Aorta (tissue), 5 donors: ENCODE measurements at regions of chr17 and their contacts with region 1.

Region 1: DNA sequence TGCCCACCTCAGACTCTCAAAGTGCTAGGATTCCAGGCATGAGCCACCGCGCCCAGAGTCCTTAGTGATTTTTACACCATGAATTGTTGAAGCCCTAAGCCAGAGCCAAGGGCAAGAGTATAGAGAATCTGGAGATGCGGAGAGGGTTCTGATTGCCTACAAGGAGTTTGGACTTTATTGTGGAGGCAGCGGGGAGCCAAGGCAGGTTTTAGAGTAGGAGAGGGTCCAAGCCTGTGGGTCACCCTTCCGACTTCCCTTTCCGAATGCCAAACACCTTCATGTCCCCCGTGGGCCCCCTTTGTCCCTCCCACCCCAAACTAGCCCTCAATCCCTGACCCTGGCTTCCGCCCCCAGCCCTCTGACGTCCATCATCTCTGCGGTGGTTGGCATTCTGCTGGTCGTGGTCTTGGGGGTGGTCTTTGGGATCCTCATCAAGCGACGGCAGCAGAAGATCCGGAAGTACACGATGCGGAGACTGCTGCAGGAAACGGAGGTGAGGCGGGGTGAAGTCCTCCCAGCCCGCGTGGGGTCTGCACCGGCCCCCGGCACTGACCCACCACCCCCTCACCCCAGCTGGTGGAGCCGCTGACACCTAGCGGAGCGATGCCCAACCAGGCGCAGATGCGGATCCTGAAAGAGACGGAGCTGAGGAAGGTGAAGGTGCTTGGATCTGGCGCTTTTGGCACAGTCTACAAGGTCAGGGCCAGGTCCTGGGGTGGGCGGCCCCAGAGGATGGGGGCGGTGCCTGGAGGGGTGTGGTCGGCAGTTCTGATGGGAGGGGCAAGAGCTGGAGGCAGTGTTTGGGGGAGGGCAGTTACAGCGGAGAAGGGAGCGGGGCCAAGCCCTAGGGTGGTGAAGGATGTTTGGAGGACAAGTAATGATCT is 7.1 kb downstream of the MIEN1 start:
- DNase-seq: peak in 1 of 2 donors; percentile 34
- ATAC-seq: no peak
- H3K4me3 ChIP-seq: no peak overlapping the region
- H3K27ac ChIP-seq: no peak overlapping the region
- H3K4me1 ChIP-seq: no peaks in the 10 kb centered on the region
- H3K27me3 ChIP-seq: no peaks in the 10 kb centered on the region

Region 2: GRCh38 chr17:39676198-39676819 is 46.9 kb before region 1 on chr17:
- intact Hi-C with region 1: no loop called
- DNase-seq: peak; percentile 84 to 90
- ATAC-seq: peak; percentile 33
- H3K4me3 ChIP-seq: no peak overlapping the region
- H3K27ac ChIP-seq: peak overlapping the region in 1 of 2 donors; percentile 77
- H3K4me1 ChIP-seq: peaks cover 0 to 3% of the 10 kb centered on the region in 2 donors
- H3K27me3 ChIP-seq: no peaks in the 10 kb centered on the region

Region 3: GRCh38 chr17:39750131-39751015 is 27.2 kb after region 1 on chr17:
- intact Hi-C with region 1: no loop called
- DNase-seq: peak in 1 of 2 donors; percentile 50
- ATAC-seq: no peak
- H3K4me3 ChIP-seq: no peak overlapping the region
- H3K27ac ChIP-seq: no peak overlapping the region
- H3K4me1 ChIP-seq: no peaks in the 10 kb centered on the region
- H3K27me3 ChIP-seq: no peaks in the 10 kb centered on the region

Region 4: DNA sequence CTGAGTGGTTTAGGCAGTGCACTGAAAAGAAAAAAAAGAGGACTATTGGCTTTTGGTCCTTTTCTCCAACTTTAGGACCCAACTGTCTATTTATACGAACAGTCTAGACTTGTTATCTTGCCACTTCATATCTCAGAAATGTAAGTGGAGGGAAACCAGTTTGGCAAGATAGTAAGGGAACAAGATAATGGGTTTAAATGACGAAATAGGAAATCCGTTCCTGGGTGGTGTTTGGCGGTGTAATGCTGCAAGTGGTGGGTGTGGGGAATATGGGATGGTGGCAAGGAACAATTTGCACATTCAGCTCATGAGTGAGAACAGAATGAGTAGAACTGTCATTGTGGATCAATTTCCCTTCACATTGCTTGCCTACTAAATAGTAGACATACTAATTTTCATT is 59.3 kb after region 1 on chr17:
- intact Hi-C with region 1: loop called in 1 of 2 experiments (anchors 10 kb)
- DNase-seq: no peak
- ATAC-seq: no peak
- H3K4me3 ChIP-seq: no peak overlapping the region
- H3K27ac ChIP-seq: no peak overlapping the region
- H3K4me1 ChIP-seq: peaks cover 2% of the 10 kb centered on the region in 2 donors
- H3K27me3 ChIP-seq: no peaks in the 10 kb centered on the region

Region 5: DNA sequence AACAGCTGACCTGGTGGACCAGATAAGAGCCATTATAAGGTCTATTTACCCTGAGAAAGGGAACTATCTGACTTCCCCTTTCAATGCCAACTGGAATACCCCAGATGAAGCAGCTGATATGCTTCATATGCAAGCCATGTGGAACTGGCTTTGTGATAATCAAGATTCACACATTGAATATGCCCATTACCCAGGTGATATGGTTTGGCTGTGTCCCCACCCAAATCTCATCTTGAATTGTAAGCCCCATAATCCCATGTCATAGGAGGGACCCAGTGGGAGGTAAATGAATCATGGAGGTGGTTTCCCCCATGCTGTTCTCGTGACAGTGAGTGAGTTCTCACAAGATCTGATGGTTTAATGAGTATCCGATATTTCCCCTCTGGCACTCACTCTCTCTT is 98.8 kb after region 1 on chr17:
- intact Hi-C with region 1: no loop called
- DNase-seq: no peak
- ATAC-seq: no peak
- H3K4me3 ChIP-seq: no peak overlapping the region
- H3K27ac ChIP-seq: no peak overlapping the region
- H3K4me1 ChIP-seq: no peaks in the 10 kb centered on the region
- H3K27me3 ChIP-seq: peaks cover 0 to 2% of the 10 kb centered on the region in 2 donors